ENCODE measurements at regions of chr5 and their contacts with region 1.

Region 1: GRCh38 chr5:132753135-132753987 is 6.1 kb downstream of the CCNI2 start:
- DNase-seq: peak; percentile 49
- ATAC-seq: peak; percentile 47
- H3K4me3 Mint-ChIP-seq: no peak overlapping the region
- H3K27ac Mint-ChIP-seq: peak overlapping the region; percentile 7
- H3K4me1 Mint-ChIP-seq: peaks cover 28% of the 10 kb centered on the region
- H3K27me3 Mint-ChIP-seq: no peaks in the 10 kb centered on the region

Region 2: GRCh38 chr5:132777209-132778069 is 24.1 kb after region 1 on chr5 and contains the start of gene SEPTIN8:
- CTCF ChIA-PET with region 1: no interaction called
- POLR2A ChIA-PET with region 1: no interaction called
- intact Hi-C with region 1: loop called in 1 of 2 experiments (anchors 1 kb)
- DNase-seq: peak; percentile 67
- ATAC-seq: peak; percentile 79
- H3K4me3 Mint-ChIP-seq: peak within 1 kb of the TSS; percentile 65
- H3K27ac Mint-ChIP-seq: peak within 1 kb of the TSS; percentile 8
- H3K4me1 Mint-ChIP-seq: peaks cover 7% of the 10 kb centered on the region
- H3K27me3 Mint-ChIP-seq: peaks cover 37% of the 10 kb centered on the region
- total RNA-seq, gene SEPTIN8: 18.6 to 19.9 TPM

Region 3: GRCh38 chr5:132927355-132928061 is 174.1 kb after region 1 on chr5:
- CTCF ChIA-PET with region 1: no interaction called
- POLR2A ChIA-PET with region 1: no interaction called
- intact Hi-C with region 1: no loop called
- DNase-seq: no peak
- ATAC-seq: no peak
- H3K4me3 Mint-ChIP-seq: no peak overlapping the region
- H3K27ac Mint-ChIP-seq: no peak overlapping the region
- H3K4me1 Mint-ChIP-seq: peaks cover 6% of the 10 kb centered on the region
- H3K27me3 Mint-ChIP-seq: no peaks in the 10 kb centered on the region

Measured in activated CD4-positive, alpha-beta T cell treated with anti-CD3 and anti-CD28 coated beads for 36 hours (primary cell).